ENCODE measurements at regions of chr1 and their contacts with region 1.

Region 1: DNA sequence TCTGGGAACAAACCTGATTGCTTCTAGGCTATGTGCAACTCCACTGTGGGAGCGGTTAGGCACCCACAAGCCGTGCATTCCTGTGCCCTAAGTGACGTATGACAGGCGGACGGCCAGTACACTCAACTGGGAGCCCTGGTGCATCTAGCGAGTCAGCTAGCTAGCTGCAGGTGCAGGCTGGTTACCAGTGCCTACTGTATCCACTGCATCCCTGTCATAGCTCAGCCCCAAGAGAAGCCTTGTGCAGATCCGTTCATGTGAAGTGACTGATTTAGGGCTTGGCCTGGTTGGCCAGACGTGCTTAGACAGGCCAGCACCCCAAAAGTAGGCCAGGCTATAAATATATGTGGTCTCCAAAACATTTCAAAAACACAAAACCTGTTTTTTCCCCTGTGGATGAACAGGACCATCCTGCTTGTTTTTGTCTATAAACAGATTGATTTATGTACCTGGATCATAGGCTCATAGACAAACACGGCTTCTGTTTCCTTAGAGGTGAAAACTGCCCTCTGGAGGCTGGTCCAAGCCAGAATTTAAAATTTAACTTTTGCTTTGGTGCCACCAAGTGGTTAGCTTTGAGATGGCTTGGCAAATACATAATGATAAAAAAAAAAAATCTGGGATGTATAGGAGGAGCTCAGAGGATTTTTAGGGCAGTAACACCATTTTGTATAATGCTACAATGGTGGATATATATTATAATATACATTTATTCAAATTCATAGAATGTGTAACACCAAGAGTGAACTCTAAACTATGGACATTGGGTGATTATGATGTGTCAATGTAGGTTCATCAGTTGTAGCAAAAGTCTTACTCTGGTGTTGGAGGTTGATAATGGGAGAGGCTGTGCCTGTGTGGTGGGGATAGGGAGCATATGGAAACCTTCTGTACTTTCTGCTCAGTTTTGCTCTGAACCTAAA is 68.5 kb downstream of the GIPC2 start:
- DNase-seq: peak; percentile 21 to 78 (median 52)
- ATAC-seq: peak; percentile 97
- H3K4me3 ChIP-seq: no peak overlapping the region
- H3K4me3 Mint-ChIP-seq: no peak overlapping the region
- H3K27ac ChIP-seq: no peak overlapping the region
- H3K27ac Mint-ChIP-seq: no peak overlapping the region
- H3K4me1 ChIP-seq: no peaks in the 10 kb centered on the region
- H3K4me1 Mint-ChIP-seq: no peaks in the 10 kb centered on the region
- H3K27me3 ChIP-seq: no peaks in the 10 kb centered on the region
- H3K27me3 Mint-ChIP-seq: no peaks in the 10 kb centered on the region
- CTCF ChIP-seq: peak; percentile 99

Region 2: GRCh38 chr1:76901158-76901767 is 1213.0 kb before region 1 on chr1:
- CTCF ChIA-PET with region 1: no interaction called
- POLR2A ChIA-PET with region 1: no interaction called
- intact Hi-C with region 1: loop called in 1 of 2 experiments (anchors 10 kb)
- DNase-seq: peak in 6 of 9 experiments; percentile 2 to 59 (median 25)
- ATAC-seq: no peak
- H3K4me3 ChIP-seq: no peak overlapping the region
- H3K4me3 Mint-ChIP-seq: no peak overlapping the region
- H3K27ac ChIP-seq: no peak overlapping the region
- H3K27ac Mint-ChIP-seq: no peak overlapping the region
- H3K4me1 ChIP-seq: no peaks in the 10 kb centered on the region
- H3K4me1 Mint-ChIP-seq: no peaks in the 10 kb centered on the region
- H3K27me3 ChIP-seq: no peaks in the 10 kb centered on the region
- H3K27me3 Mint-ChIP-seq: peaks cover 4% of the 10 kb centered on the region
- CTCF ChIP-seq: peak; percentile 52

Region 3: DNA sequence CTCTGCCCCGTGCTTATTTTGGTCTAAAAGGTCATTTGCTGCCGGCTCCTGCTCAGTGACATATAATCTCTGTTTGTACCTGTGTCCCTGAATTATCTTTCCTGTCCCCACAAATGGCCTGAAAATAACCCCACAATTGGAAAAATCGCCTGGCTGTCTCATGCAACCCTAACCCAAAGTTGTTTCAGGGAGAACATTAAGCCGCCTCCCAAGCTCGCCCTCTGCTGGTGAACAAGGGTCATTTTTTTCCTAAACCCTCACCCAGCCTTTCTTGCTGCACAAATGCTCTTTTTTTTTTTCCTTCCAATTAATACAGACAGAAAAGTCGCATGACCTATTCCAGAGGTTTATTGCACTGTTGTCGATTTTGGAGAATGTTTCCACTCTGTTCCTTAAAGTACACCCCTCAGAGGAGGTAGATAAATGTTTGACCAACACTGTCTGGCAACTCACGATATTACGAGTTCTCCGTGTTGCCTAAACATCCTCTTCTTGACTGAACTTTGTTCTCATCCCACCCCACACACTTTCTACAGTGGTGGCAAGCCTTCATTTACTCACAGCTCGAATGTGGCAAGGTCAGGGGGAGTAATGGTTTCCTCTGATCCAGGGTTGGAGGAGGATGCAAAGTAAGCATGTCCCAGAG is 580.5 kb before region 1 on chr1:
- CTCF ChIA-PET with region 1: no interaction called
- POLR2A ChIA-PET with region 1: no interaction called
- intact Hi-C with region 1: loop called in 1 of 2 experiments (anchors 10 kb)
- DNase-seq: peak; percentile 26 to 77 (median 61)
- ATAC-seq: peak; percentile 62
- H3K4me3 ChIP-seq: no peak overlapping the region
- H3K4me3 Mint-ChIP-seq: peak overlapping the region; percentile 38
- H3K27ac ChIP-seq: no peak overlapping the region
- H3K27ac Mint-ChIP-seq: peak overlapping the region; percentile 21
- H3K4me1 ChIP-seq: peaks cover 9% of the 10 kb centered on the region
- H3K4me1 Mint-ChIP-seq: peaks cover 7% of the 10 kb centered on the region
- H3K27me3 ChIP-seq: no peaks in the 10 kb centered on the region
- H3K27me3 Mint-ChIP-seq: no peaks in the 10 kb centered on the region
- CTCF ChIP-seq: peak; percentile 91

Region 4: GRCh38 chr1:77744576-77744975 is 369.7 kb before region 1 on chr1:
- CTCF ChIA-PET with region 1: interaction called, 4 read pairs
- POLR2A ChIA-PET with region 1: no interaction called
- intact Hi-C with region 1: loop called in 1 of 2 experiments (anchors 5 kb)
- DNase-seq: no peak
- ATAC-seq: no peak
- H3K4me3 ChIP-seq: no peak overlapping the region
- H3K4me3 Mint-ChIP-seq: no peak overlapping the region
- H3K27ac ChIP-seq: no peak overlapping the region
- H3K27ac Mint-ChIP-seq: peak overlapping the region; percentile 47
- H3K4me1 ChIP-seq: no peaks in the 10 kb centered on the region
- H3K4me1 Mint-ChIP-seq: peaks cover 57% of the 10 kb centered on the region
- H3K27me3 ChIP-seq: no peaks in the 10 kb centered on the region
- H3K27me3 Mint-ChIP-seq: no peaks in the 10 kb centered on the region
- CTCF ChIP-seq: no peak

Region 5: DNA sequence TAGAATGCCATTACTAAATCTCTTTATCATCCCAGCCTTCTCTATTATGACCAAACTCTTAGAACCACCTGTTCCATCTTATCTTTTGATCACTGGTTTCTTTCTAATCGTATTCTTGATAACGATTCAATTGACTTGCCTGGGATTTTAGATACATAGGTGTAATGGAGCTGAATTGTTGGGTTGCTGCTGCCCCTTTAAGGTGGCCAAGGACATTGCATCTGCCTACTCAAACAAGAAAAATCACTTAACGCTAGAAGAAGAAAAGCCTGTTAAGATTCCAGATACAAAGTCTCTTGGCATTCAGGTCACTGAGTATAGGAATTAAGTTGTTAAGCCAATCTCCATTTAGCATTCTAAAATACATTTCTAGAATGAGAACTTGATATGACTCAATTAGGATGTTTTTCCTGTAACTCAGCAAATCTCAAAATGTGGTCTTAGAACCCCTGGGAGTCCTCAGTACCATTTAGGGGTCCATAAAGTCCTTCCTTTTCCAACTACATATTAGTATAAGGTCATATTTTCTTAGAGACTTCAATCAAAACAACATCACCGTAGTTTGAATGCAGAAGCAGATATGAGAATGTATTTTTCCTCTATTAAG is 213.5 kb before region 1 on chr1:
- CTCF ChIA-PET with region 1: interaction called, 3 read pairs
- POLR2A ChIA-PET with region 1: no interaction called
- intact Hi-C with region 1: loop called in 1 of 2 experiments (anchors 1 kb)
- DNase-seq: peak in 2 of 9 experiments; percentile 22 to 44
- ATAC-seq: peak; percentile 34
- H3K4me3 ChIP-seq: no peak overlapping the region
- H3K4me3 Mint-ChIP-seq: no peak overlapping the region
- H3K27ac ChIP-seq: no peak overlapping the region
- H3K27ac Mint-ChIP-seq: no peak overlapping the region
- H3K4me1 ChIP-seq: no peaks in the 10 kb centered on the region
- H3K4me1 Mint-ChIP-seq: no peaks in the 10 kb centered on the region
- H3K27me3 ChIP-seq: no peaks in the 10 kb centered on the region
- H3K27me3 Mint-ChIP-seq: no peaks in the 10 kb centered on the region
- CTCF ChIP-seq: peak; percentile 41

Region 6: DNA sequence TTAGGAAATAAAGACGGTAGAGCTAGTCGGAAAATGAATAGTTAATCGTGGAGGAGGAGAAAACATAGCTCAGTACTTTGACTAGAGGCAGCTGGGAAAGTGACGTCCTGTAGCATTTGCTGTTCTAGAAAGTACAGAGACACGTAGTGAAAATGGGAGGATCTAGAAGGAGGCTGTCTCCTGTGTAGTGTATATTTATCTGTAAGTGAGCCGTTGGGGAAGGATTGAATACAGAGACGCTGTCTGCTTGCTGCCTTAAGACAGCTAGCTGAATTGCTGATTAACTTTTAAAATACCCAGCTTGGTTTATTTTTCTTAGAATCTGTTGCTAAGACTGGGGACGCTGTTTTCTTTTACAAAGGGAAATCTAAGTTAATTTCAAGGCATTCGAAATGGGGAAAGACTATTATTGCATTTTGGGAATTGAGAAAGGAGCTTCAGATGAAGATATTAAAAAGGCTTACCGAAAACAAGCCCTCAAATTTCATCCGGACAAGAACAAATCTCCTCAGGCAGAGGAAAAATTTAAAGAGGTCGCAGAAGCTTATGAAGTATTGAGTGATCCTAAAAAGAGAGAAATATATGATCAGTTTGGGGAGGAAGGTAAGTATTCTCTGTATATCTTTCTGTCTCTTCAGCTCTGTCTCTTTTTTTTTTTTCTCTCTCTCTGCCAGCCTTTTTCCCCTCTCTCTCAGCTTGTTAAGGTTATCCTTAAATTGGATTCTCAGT is 109.4 kb before region 1 on chr1 and contains the start of gene DNAJB4:
- CTCF ChIA-PET with region 1: interaction called, 7 read pairs
- POLR2A ChIA-PET with region 1: no interaction called
- intact Hi-C with region 1: loop called in 1 of 2 experiments (anchors 10 kb)
- DNase-seq: peak; percentile 20 to 94 (median 60)
- ATAC-seq: peak; percentile 98
- H3K4me3 ChIP-seq: peak within 1 kb of the TSS; percentile 53 to 71
- H3K4me3 Mint-ChIP-seq: peak within 1 kb of the TSS; percentile 93
- H3K27ac ChIP-seq: peak within 1 kb of the TSS; percentile 96 to 98
- H3K27ac Mint-ChIP-seq: peak within 1 kb of the TSS; percentile 99
- H3K4me1 ChIP-seq: peaks cover 16% of the 10 kb centered on the region
- H3K4me1 Mint-ChIP-seq: peaks cover 49% of the 10 kb centered on the region
- H3K27me3 ChIP-seq: no peaks in the 10 kb centered on the region
- H3K27me3 Mint-ChIP-seq: no peaks in the 10 kb centered on the region
- CTCF ChIP-seq: no peak
- total RNA-seq, gene DNAJB4: 13.3 to 13.4 TPM

Region 7: DNA sequence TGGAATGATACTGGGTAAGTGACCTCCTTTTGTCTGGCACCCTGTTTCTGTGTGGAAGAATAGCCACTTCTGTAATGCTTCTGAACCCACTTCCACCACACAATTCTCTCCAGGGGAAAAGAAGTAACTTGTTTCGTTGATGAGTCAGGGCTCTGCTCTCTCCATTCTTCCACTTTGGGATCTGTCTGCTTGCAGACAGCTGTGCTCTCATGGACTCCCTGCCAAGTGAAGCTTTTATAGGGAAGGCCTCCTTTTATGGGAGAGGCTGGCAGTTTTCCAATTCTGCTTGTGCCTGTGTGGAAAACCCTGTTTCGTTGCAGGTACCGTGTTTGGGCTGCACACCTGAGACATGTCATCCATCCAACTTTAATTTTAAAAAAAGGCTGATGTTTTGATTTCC is 62.2 kb after region 1 on chr1:
- CTCF ChIA-PET with region 1: no interaction called
- POLR2A ChIA-PET with region 1: no interaction called
- intact Hi-C with region 1: no loop called
- DNase-seq: no peak
- ATAC-seq: no peak
- H3K4me3 ChIP-seq: no peak overlapping the region
- H3K4me3 Mint-ChIP-seq: no peak overlapping the region
- H3K27ac ChIP-seq: no peak overlapping the region
- H3K27ac Mint-ChIP-seq: no peak overlapping the region
- H3K4me1 ChIP-seq: no peaks in the 10 kb centered on the region
- H3K4me1 Mint-ChIP-seq: no peaks in the 10 kb centered on the region
- H3K27me3 ChIP-seq: no peaks in the 10 kb centered on the region
- H3K27me3 Mint-ChIP-seq: no peaks in the 10 kb centered on the region
- CTCF ChIP-seq: no peak